ENCODE measurements at regions of chr21 and their contacts with region 1.

Region 1: DNA sequence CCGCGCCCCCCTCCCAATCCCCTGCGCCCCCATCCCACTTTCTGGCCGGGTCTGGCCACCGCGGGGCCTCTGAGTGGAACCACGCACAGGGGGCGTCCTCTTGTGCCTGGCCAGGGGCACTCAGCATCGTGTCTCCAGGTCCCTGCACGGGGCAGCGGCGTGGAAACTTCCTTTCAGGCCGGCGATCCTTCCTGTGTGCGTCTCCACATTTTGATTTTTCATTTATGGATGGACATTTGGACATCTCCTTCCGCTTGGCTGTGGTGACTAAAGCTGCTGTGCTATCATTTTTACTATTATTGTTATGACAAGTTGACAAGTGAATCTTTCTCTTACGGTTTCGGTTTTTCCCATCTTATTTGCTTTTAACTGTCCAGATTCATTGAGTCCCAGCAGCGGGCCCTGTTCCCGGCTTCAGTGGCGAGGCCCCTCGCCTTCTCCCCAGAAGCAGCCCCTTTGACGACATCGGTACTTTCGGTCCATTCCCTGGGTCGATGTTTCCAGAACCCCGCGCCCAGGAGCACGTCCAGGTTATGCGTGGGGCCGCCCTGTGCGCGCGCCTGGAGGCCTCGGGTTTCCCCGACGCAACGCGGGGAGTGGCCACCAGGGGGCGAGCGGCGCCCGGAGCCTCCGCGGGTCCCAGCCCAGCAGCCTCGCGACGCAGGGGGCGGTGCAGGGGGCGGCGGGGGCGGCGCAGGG is 12.4 kb upstream of the SLC19A1 start:
- DNase-seq: peak; percentile 94
- ATAC-seq: peak; percentile 80
- H3K4me3 Mint-ChIP-seq: peak overlapping the region; percentile 89
- H3K27ac Mint-ChIP-seq: peak overlapping the region; percentile 71
- H3K4me1 Mint-ChIP-seq: peaks cover 40% of the 10 kb centered on the region
- H3K27me3 Mint-ChIP-seq: no peaks in the 10 kb centered on the region
- CTCF ChIP-seq: no peak

Region 2: DNA sequence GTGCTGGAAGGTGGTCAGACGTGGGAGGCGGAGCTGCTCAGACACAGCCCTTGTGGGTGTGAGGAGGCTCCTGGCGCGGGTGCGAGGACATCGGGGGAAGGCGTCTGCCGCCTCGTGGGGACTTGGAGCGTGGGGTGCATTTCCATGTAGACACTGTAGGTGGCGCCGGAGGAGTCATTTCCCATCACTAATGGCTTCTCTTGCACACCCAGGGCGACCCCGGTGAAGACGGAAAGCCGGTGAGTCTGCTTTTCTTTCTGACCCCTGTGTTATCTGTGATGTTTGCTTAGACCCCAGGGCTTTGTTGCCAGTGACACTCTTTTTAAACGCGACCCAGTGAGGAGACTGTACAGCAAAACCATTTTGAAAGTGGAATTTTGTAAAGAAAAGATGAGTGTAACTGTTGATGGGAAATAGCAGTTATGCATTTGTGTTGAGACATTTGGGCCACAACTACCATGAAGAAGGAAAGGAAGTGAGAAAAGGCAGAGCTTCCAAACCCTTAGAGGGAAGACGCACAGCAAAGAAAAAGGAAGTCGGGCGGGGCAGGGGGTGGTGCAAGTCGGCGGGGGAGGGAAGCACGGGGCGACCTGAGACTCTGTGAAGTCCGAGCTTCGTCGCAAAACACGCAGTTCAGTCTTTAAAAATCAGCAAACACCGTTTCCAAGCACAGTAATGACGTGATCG is 76.4 kb before region 1 on chr21:
- CTCF ChIA-PET with region 1: no interaction called
- POLR2A ChIA-PET with region 1: interaction called, 7 read pairs
- intact Hi-C with region 1: loop called (anchors 1 kb)
- DNase-seq: peak; percentile 64
- ATAC-seq: peak; percentile 87
- H3K4me3 Mint-ChIP-seq: peak overlapping the region; percentile 73
- H3K27ac Mint-ChIP-seq: peak overlapping the region; percentile 85
- H3K4me1 Mint-ChIP-seq: peaks cover 40% of the 10 kb centered on the region
- H3K27me3 Mint-ChIP-seq: no peaks in the 10 kb centered on the region
- CTCF ChIP-seq: no peak

Region 3: GRCh38 chr21:45590246-45590725 is 35.7 kb after region 1 on chr21:
- CTCF ChIA-PET with region 1: interaction called, 16 read pairs
- POLR2A ChIA-PET with region 1: interaction called, 3 read pairs
- intact Hi-C with region 1: loop called (anchors 1 kb)
- DNase-seq: peak; percentile 43
- ATAC-seq: peak; percentile 70
- H3K4me3 Mint-ChIP-seq: no peak overlapping the region
- H3K27ac Mint-ChIP-seq: no peak overlapping the region
- H3K4me1 Mint-ChIP-seq: peaks cover 3% of the 10 kb centered on the region
- H3K27me3 Mint-ChIP-seq: peaks cover 30% of the 10 kb centered on the region
- CTCF ChIP-seq: no peak

Region 4: GRCh38 chr21:45643021-45643980 is 88.7 kb after region 1 on chr21 and contains the start of gene PCBP3:
- CTCF ChIA-PET with region 1: no interaction called
- POLR2A ChIA-PET with region 1: no interaction called
- intact Hi-C with region 1: loop called (anchors 2 kb)
- DNase-seq: peak; percentile 75
- ATAC-seq: peak; percentile 79
- H3K4me3 Mint-ChIP-seq: peak within 1 kb of the TSS; percentile 67
- H3K27ac Mint-ChIP-seq: no peak within 1 kb of the TSS
- H3K4me1 Mint-ChIP-seq: peaks cover 40% of the 10 kb centered on the region
- H3K27me3 Mint-ChIP-seq: peaks cover 32% of the 10 kb centered on the region
- CTCF ChIP-seq: no peak
- total RNA-seq, gene PCBP3: not detected in 2 replicates

Region 5: GRCh38 chr21:46184625-46185555 is 630.3 kb after region 1 on chr21:
- CTCF ChIA-PET with region 1: no interaction called
- POLR2A ChIA-PET with region 1: interaction called, 10 read pairs
- intact Hi-C with region 1: no loop called
- DNase-seq: peak; percentile 69
- ATAC-seq: peak; percentile 82
- H3K4me3 Mint-ChIP-seq: peak overlapping the region; percentile 89
- H3K27ac Mint-ChIP-seq: peak overlapping the region; percentile 85
- H3K4me1 Mint-ChIP-seq: peaks cover 5% of the 10 kb centered on the region
- H3K27me3 Mint-ChIP-seq: no peaks in the 10 kb centered on the region
- CTCF ChIP-seq: no peak